ENCODE measurements at regions of chr7 and their contacts with region 1.

Region 1: DNA sequence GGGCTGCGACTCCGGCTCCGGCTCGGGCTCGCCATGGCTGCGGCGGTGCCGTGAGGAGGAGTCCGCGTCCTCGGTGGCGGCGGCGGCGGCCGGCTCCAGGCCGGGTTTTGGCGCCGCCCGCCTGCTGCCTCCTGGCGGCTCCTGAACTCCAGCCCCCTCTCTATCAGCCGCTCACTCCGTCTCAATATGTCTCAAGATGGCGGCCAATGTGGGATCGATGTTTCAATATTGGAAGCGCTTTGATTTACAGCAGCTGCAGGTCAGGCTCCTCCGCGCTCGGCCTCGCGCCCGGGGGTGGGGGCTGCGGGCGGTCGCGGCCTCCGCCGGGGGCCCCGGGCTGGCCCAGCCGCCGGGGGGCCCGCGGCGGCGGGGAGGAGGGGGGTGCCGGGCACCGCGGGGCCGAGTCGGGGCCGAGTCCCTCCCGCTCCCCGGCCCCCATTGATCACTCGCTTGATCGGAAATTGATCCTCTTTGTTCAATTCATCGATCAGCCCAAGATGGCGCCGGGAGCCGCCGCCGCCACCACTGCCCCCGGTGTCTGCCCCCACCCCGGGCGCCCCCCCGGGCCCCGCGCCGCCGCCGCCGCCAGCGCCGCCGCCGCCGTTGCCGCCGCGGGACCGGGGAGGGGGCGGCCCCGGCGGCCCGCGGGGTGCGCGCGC is 1.5 kb upstream of the CUX1 start:
- DNase-seq: peak; percentile 70
- ATAC-seq: peak; percentile 68
- H3K4me3 ChIP-seq: peak overlapping the region; percentile 55 to 73 (median 71); a peak in 4 of 6 replicates
- H3K27ac ChIP-seq: peak overlapping the region; percentile 74
- H3K4me1 ChIP-seq: peaks cover 51% of the 10 kb centered on the region
- H3K27me3 ChIP-seq: no peaks in the 10 kb centered on the region; a peak in 3 of 5 replicates
- CTCF ChIP-seq: no peak
- EP300 ChIP-seq: no peak
- POLR2A ChIP-seq: peak; percentile 41 to 49; a peak in 2 of 4 replicates
- RAD21 ChIP-seq: no peak

Region 2: DNA sequence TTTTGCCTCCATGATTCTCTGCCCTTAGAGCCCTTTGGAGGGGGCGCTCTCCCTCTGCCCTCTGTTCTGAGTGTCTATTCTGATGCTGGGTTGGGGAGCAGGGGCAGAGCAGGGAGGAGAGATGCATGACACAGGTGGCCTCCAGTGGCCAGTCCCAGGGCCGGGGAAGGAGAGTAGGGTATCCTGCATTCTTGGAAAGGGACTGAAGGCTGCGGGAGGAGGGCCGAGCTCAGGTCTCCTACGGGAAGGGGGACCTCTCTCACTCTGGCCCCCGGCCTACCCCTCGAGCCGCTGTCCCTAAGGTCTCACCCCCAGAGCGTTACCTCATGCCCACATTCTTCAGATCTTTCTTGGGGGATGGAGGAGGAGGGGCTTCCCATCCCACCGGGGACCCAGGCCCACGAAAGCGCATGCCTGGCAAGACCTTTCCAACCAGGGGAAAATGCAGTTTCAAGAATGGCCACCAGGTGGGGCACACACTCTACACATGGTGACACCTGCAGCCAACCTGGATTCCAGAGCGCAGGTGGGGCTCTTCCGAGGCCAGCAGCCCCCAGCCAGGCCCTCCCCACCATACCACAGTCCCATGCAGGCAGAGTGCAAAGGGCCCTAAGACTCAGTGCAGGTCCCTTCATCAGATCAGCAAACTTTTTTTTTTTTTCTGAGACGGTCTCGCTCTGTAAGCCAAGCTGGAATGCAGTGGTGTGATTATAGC is 273.3 kb before region 1 on chr7:
- CTCF ChIA-PET with region 1: interaction called, 4 read pairs
- POLR2A ChIA-PET with region 1: no interaction called
- in situ Hi-C with region 1: loop called (anchors 10 kb)
- intact Hi-C with region 1: loop called (anchors 5 kb)
- DNase-seq: peak; percentile 53
- ATAC-seq: peak; percentile 57
- H3K4me3 ChIP-seq: no peak overlapping the region
- H3K27ac ChIP-seq: no peak overlapping the region
- H3K4me1 ChIP-seq: peaks cover 18% of the 10 kb centered on the region
- H3K27me3 ChIP-seq: no peaks in the 10 kb centered on the region
- CTCF ChIP-seq: peak; percentile 95
- EP300 ChIP-seq: no peak
- POLR2A ChIP-seq: no peak
- RAD21 ChIP-seq: peak; percentile 85

Region 3: GRCh38 chr7:101688183-101688831 is 127.7 kb before region 1 on chr7:
- CTCF ChIA-PET with region 1: interaction called, 9 read pairs
- POLR2A ChIA-PET with region 1: no interaction called
- in situ Hi-C with region 1: loop called (anchors 5 kb)
- intact Hi-C with region 1: loop called (anchors 1 kb)
- DNase-seq: peak; percentile 44
- ATAC-seq: peak; percentile 86
- H3K4me3 ChIP-seq: peak overlapping the region in 2 of 3 experiments; percentile 53 to 72; a peak in 3 of 6 replicates
- H3K27ac ChIP-seq: no peak overlapping the region
- H3K4me1 ChIP-seq: peaks cover 40% of the 10 kb centered on the region
- H3K27me3 ChIP-seq: peaks cover 0 to 14% of the 10 kb centered on the region in 2 experiments; a peak in 2 of 5 replicates
- CTCF ChIP-seq: peak; percentile 99
- EP300 ChIP-seq: no peak
- POLR2A ChIP-seq: no peak
- RAD21 ChIP-seq: peak; percentile 95

Region 4: GRCh38 chr7:101856473-101857357 is 40.8 kb after region 1 on chr7:
- CTCF ChIA-PET with region 1: no interaction called
- POLR2A ChIA-PET with region 1: interaction called, 5 read pairs
- in situ Hi-C with region 1: no loop called
- intact Hi-C with region 1: loop called (anchors 5 kb)
- DNase-seq: peak; percentile 95
- ATAC-seq: peak; percentile 96
- H3K4me3 ChIP-seq: peak overlapping the region; percentile 34 to 68 (median 43); a peak in 5 of 6 replicates
- H3K27ac ChIP-seq: peak overlapping the region; percentile 78
- H3K4me1 ChIP-seq: peaks cover 67% of the 10 kb centered on the region
- H3K27me3 ChIP-seq: no peaks in the 10 kb centered on the region
- CTCF ChIP-seq: peak; percentile 77
- EP300 ChIP-seq: no peak
- POLR2A ChIP-seq: peak in 1 of 2 experiments; percentile 43; a peak in 2 of 4 replicates
- RAD21 ChIP-seq: peak; percentile 62

Region 5: DNA sequence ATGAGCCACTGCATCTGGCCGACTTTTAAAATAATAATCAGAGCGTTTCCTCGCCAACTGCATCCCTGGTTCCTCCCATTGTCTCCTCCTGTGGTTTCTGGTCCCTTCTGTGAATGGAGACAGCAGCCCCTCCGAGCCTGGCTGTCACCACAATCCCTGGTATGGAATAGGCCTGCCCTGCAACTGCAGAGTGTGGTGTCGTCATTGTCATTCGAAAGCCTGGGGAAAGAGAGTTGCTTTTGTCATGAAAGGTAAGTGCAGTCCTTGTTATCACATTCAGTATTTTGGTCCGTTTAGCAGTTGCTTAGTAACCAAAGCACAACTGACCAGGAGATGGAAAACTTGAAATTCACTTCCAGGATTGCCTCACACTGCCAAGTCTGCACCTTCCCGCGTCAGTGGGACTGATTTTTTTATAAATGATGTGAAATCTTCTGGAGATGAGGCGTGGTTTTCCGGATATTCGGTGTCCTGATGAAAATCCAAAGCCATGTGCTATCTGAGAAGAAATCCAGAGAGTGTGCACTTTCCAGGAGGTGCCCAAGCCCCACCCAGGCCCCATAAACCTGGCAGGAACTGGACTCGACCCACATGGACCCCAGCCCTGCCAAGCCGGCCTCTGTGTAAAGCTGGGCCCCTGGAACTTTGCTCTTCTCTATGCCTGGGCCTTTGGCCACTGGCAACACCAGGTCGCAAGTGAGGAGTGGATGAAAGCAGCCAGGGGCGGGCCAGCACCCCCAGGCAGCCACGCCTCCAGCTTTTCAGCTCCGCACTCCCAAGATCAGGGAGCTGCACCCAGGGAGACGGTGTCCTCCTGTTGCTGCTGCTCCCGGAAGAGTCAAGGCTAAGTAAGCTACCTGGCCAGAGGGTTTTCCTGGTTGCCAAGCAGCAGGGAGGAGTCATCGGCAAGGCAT is 337.0 kb after region 1 on chr7:
- CTCF ChIA-PET with region 1: no interaction called
- POLR2A ChIA-PET with region 1: no interaction called
- in situ Hi-C with region 1: no loop called
- intact Hi-C with region 1: no loop called
- DNase-seq: peak; percentile 94
- ATAC-seq: peak; percentile 93
- H3K4me3 ChIP-seq: peak overlapping the region; percentile 17 to 55 (median 26); a peak in 4 of 6 replicates
- H3K27ac ChIP-seq: peak overlapping the region; percentile 100
- H3K4me1 ChIP-seq: peaks cover 70% of the 10 kb centered on the region
- H3K27me3 ChIP-seq: no peaks in the 10 kb centered on the region
- CTCF ChIP-seq: no peak
- EP300 ChIP-seq: peak; percentile 14 to 50; a peak in 1 of 4 replicates
- POLR2A ChIP-seq: peak; percentile 61 to 87; a peak in 3 of 4 replicates
- RAD21 ChIP-seq: 0 out of 2 replicates have a peak, but pooled peaks have one; percentile 50

Region 6: GRCh38 chr7:102236592-102237287 is 420.8 kb after region 1 on chr7:
- CTCF ChIA-PET with region 1: no interaction called
- POLR2A ChIA-PET with region 1: no interaction called
- in situ Hi-C with region 1: no loop called
- intact Hi-C with region 1: loop called (anchors 1 kb)
- DNase-seq: peak; percentile 46
- ATAC-seq: peak; percentile 95
- H3K4me3 ChIP-seq: no peak overlapping the region
- H3K27ac ChIP-seq: no peak overlapping the region
- H3K4me1 ChIP-seq: peaks cover 7% of the 10 kb centered on the region
- H3K27me3 ChIP-seq: no peaks in the 10 kb centered on the region
- CTCF ChIP-seq: peak; percentile 94
- EP300 ChIP-seq: no peak
- POLR2A ChIP-seq: no peak
- RAD21 ChIP-seq: peak; percentile 94